GM23248 (cell line): ENCODE measurements at regions of chr1 and their contacts with region 1.

Region 1: GRCh38 chr1:53754484-53755312 is 15.7 kb upstream of the GLIS1 start:
- DNase-seq: peak; percentile 78
- H3K4me3 ChIP-seq: no peak overlapping the region
- H3K27ac ChIP-seq: no peak overlapping the region
- H3K4me1 ChIP-seq: no peaks in the 10 kb centered on the region
- H3K27me3 ChIP-seq: no peaks in the 10 kb centered on the region

Region 2: GRCh38 chr1:53485478-53486394 is 269.0 kb before region 1 on chr1:
- in situ Hi-C with region 1: loop called (anchors 10 kb)
- DNase-seq: peak; percentile 87
- H3K4me3 ChIP-seq: no peak overlapping the region
- H3K27ac ChIP-seq: no peak overlapping the region
- H3K4me1 ChIP-seq: no peaks in the 10 kb centered on the region
- H3K27me3 ChIP-seq: peaks cover 28% of the 10 kb centered on the region